Activated CD8-positive, alpha-beta memory T cell treated with anti-CD3 and anti-CD28 coated beads, Interleukin-2, amount 10 ng/mL, durations not matched to agents 7 days and 5 days (primary cell): ENCODE measurements at regions of chr12 and their contacts with region 1.

Region 1: DNA sequence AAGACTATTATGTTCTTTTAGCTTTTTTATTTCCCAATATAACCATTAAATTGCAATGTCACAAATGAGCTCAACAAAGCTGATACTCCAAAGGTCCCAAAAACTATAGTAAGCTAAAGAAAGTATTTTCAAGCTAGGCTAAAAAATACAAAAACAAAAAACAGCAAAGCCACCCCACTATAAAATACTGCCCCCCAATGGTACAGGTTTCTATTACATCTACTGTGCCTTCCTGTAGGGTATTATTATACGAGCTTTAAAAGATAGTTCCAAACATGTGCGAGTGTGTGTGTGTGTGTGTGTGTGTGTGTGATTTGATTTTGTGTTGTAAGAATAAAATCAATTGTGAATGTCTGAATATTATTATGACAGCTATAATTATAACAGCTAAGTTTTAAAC is 1.1 kb downstream of the IFNG start:
- DNase-seq: no peak
- ATAC-seq: peak; percentile 10
- H3K4me3 Mint-ChIP-seq: peak overlapping the region; percentile 88
- H3K27ac Mint-ChIP-seq: peak overlapping the region; percentile 70
- H3K4me1 Mint-ChIP-seq: peaks cover 68% of the 10 kb centered on the region
- H3K27me3 Mint-ChIP-seq: no peaks in the 10 kb centered on the region

Region 2: GRCh38 chr12:68094645-68095395 is 63.6 kb before region 1 on chr12:
- CTCF ChIA-PET with region 1: interaction called, 11 read pairs
- DNase-seq: peak; percentile 57
- ATAC-seq: peak; percentile 64
- H3K4me3 Mint-ChIP-seq: no peak overlapping the region
- H3K27ac Mint-ChIP-seq: peak overlapping the region; percentile 73
- H3K4me1 Mint-ChIP-seq: peaks cover 30% of the 10 kb centered on the region
- H3K27me3 Mint-ChIP-seq: no peaks in the 10 kb centered on the region

Region 3: GRCh38 chr12:68113644-68114043 is 44.8 kb before region 1 on chr12:
- CTCF ChIA-PET with region 1: interaction called, 207 read pairs
- DNase-seq: peak; percentile 72
- ATAC-seq: peak; percentile 54
- H3K4me3 Mint-ChIP-seq: no peak overlapping the region
- H3K27ac Mint-ChIP-seq: no peak overlapping the region
- H3K4me1 Mint-ChIP-seq: peaks cover 49% of the 10 kb centered on the region
- H3K27me3 Mint-ChIP-seq: no peaks in the 10 kb centered on the region

Region 4: DNA sequence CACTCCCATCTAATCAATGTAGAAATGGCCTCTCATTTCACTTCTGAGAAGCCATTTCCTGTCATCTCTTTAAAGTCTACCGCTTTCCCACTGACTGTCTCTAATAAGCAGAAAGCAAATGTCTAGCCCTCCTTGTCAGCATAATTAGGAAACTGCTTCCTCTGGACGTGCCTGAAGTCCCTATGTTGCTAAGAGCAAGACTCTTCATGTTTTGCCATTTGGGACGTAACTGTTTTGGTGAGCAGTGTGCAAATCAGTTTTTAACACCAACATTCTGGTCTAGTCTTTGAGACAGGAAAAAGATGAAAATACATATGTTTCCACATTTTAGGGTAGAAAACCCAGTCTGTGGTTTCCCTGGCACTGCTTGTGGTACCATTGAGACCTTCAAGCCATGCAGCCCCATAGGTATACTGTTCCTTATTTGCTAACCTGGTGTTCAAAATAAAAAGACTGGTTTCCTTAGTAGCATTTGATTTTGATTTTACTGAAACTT is 21.0 kb before region 1 on chr12:
- CTCF ChIA-PET with region 1: interaction called, 12 read pairs
- DNase-seq: no peak
- ATAC-seq: peak; percentile 62
- H3K4me3 Mint-ChIP-seq: peak overlapping the region; percentile 20
- H3K27ac Mint-ChIP-seq: peak overlapping the region; percentile 86
- H3K4me1 Mint-ChIP-seq: peaks cover 49% of the 10 kb centered on the region
- H3K27me3 Mint-ChIP-seq: no peaks in the 10 kb centered on the region